Left cardiac atrium (tissue), 4 donors: ENCODE measurements at regions of chr12 and their contacts with region 1.

Region 1: DNA sequence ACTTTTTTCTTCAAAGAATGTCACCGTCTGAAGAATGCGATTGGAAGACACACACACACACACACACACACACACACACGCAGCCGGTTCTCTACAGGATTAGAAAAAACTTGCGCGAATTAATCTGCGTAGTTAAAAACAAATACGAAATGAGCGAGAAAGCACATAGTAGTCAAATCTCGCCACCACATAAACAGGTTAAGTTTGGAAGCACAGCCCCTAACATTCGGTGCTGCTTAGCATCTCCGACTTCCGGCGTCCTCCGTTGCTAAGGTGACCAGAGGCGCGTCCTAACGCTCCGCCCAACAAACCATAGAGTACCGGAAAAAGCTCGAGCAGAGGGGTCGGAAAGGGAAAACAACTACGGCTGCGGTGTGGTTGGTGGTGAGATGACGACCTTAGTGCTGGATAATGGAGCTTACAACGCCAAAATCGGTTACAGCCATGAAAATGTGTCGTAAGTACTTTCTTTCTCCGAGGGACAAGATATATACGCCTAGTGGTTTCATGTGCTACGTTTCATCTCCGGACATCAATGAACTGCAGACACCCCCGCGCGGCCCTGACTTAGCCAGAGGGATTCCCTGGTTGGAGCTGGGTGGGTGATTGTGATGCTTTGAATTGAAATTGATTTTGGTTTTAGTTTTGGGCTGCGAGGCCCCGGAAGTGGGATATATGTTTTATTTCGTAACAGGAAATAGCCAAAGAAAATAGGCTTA is at the start of gene ACTR6:
- DNase-seq: peak; percentile 96
- ATAC-seq: peak; percentile 98 to 99
- total RNA-seq, gene ACTR6: 19.7 to 24.3 TPM

Region 2: DNA sequence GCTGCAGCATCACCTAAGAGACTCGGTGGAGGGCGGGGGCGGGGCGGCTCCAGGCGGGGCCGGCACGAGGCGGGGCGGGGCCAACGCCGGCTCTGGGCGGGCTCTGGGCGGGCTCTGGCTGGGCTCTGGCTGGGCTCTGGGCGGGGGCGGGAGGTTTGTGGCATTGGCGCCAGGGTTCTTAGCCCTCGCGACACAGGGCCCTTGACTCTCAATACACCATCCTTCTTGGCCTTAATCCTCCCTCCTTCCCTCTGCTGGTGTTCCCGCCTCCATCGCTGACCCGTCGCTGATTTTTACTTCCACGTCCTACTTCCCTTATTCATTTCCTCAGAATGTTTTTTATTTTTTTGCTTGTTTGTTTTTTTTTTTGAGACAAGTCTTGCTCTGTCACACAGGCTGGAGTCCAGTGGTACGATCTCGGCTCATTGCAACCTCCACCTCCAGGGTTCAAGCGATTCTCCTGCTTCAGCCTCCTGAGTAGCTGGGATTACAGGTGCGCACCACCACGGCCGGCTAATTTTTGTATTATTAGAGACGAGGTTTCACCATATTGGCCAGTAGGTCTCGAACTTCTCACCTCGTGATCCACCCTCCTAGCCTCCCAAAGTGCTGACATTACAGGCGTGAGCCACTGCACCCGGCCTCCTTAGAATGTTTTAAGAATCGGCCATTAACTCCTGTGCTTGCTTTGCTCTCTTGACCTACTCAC is 57.6 kb before region 1 on chr12 and contains the start of gene BLTP3B:
- intact Hi-C with region 1: loop called in 1 of 2 experiments (anchors 5 kb)
- DNase-seq: peak; percentile 93
- ATAC-seq: peak; percentile 99
- total RNA-seq, gene BLTP3B: 13.5 to 19.4 TPM